Vagina (tissue), 2 donors: ENCODE measurements at regions of chr4 and their contacts with region 1.

Region 1: DNA sequence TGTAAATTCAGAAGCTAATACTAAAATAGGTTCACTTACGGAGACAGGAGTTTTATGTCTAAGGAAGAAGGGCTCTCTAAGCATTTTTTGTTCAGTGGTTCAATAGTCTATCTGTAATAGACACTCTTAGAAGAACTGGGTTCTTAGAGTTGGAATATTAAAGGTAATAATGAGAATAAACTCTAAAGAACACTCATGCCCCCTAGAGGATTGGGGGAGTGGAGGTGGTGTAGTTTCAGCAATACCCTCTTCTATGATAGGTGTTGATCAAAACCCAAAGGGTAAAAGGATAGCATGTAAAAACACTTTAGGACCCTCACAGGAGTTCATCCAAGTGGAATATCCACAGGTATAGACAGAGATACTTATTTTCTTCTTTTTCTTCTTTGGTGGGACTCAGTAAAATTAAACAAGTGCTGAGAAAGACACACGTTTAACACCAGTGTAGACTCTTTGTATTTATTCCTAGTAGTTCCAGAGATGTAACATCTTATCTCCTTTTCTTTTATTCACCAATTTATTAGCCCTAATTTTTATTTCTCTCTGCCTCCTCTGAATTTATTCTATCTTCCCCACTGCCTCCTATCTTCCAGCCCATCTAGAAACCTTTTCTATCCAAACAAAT is 25.7 kb upstream of the MND1 start:
- DNase-seq: no peak
- H3K4me3 ChIP-seq: no peak overlapping the region
- H3K27ac ChIP-seq: no peak overlapping the region
- H3K4me1 ChIP-seq: no peaks in the 10 kb centered on the region
- H3K27me3 ChIP-seq: no peaks in the 10 kb centered on the region
- CTCF ChIP-seq: peak; percentile 28 to 47 (median 35)
- POLR2A ChIP-seq: no peak

Region 2: DNA sequence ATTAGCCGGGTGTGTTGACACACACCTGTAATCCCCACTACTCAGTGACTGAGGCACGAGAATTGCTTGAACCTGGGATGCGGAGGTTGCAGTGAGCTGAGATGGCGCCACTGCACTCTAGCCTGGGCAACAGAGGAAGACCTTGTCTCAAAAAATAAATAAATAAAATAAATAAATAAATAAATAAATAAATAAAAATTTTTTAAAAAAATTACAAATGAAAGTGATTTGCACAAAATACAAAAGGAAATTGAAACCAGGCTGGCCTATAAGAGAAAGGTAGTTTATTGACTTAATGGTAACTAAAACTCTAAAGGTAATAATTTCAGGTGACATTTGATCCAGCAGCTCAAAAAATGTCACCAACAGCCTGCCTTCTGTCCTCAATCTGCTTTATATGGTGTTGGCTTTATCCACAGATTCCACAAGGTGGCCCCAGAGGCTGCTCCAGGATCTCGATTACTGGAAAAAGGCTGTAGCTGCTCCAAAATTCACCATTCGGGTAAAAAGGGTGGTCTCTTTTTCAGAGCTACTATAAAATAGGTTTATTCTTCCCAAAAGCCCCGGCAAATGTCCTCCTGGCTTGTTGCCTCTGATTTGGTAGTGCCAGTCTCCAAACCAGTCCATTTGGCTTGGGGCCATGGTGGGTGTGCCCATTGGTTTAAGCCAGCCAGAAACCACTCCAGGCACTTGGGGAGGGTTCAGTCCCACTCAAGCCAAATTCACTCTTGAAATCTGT is 175.9 kb before region 1 on chr4:
- intact Hi-C with region 1: loop called (anchors 5 kb)
- DNase-seq: no peak
- H3K4me3 ChIP-seq: no peak overlapping the region
- H3K27ac ChIP-seq: no peak overlapping the region
- H3K4me1 ChIP-seq: peaks cover 7% of the 10 kb centered on the region
- H3K27me3 ChIP-seq: no peaks in the 10 kb centered on the region
- CTCF ChIP-seq: peak; percentile 49 to 81 (median 78)
- POLR2A ChIP-seq: no peak

Region 3: DNA sequence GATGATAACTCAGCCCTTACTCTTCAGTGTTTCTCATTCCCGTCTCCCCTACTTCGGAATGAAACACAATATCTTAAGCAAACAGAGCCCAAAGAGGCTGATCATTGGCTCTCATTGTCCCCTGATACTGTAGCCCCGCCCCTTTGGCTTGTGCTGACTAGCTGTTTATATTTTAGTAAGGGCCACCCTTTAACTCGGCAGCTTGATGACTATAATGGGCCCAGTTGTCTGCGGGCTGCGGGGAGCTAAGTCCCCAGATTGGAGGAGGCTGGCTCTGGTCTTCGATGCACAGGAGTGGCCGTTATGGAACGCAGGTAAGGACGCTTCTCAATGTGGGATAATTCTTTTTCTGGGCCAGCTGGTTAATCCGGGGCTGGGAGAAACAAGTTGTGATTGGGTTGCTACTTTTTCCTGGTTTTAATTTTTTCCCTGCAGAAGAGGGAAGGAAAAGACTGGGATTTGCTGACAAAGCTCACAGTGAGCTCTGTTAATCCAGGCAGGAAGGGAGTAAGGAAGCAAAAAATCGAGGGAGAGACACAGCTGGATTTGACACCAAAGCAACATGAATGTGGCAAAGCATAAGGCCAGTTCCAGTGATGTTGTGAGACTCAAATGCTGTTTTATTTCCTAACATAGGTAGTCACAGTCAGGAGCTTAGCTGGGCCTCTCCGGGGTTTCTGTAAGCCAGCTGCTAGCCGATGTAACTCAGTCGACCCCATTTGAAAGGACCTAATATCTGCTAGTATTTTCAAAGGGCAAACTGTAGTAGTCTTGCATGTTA is 114.4 kb before region 1 on chr4 and contains the start of gene TRIM2:
- intact Hi-C with region 1: loop called (anchors 10 kb)
- DNase-seq: no peak
- H3K4me3 ChIP-seq: peak within 1 kb of the TSS; percentile 22 to 30
- H3K27ac ChIP-seq: peak within 1 kb of the TSS; percentile 17
- H3K4me1 ChIP-seq: peaks cover 11% of the 10 kb centered on the region
- H3K27me3 ChIP-seq: no peaks in the 10 kb centered on the region
- CTCF ChIP-seq: no peak
- POLR2A ChIP-seq: no peak
- total RNA-seq, gene TRIM2: 28.7 TPM

Region 4: DNA sequence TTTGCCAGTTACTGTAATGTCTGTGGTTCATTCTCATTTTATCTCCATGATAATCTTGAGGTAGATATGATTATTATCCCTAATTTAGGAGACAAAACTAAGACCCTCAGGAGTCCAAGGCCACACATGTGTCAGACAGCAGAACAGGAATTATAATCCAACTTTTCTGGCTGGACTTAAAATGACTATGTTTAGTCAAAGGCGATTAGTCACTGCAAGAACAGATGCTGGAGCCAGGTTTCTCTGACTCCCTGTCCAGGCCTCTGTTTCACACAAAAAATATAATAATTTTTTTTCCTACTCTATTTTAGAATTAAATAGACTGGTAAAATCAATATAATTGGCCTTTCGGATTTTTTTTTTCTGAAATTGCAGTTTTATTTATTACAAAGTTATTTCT is 90.6 kb after region 1 on chr4:
- intact Hi-C with region 1: no loop called
- DNase-seq: no peak
- H3K4me3 ChIP-seq: no peak overlapping the region
- H3K27ac ChIP-seq: peak overlapping the region; percentile 4
- H3K4me1 ChIP-seq: peaks cover 6% of the 10 kb centered on the region
- H3K27me3 ChIP-seq: no peaks in the 10 kb centered on the region
- CTCF ChIP-seq: no peak
- POLR2A ChIP-seq: no peak